Natural killer cell (primary cell): ENCODE measurements at regions of chr1 and their contacts with region 1.

Region 1: DNA sequence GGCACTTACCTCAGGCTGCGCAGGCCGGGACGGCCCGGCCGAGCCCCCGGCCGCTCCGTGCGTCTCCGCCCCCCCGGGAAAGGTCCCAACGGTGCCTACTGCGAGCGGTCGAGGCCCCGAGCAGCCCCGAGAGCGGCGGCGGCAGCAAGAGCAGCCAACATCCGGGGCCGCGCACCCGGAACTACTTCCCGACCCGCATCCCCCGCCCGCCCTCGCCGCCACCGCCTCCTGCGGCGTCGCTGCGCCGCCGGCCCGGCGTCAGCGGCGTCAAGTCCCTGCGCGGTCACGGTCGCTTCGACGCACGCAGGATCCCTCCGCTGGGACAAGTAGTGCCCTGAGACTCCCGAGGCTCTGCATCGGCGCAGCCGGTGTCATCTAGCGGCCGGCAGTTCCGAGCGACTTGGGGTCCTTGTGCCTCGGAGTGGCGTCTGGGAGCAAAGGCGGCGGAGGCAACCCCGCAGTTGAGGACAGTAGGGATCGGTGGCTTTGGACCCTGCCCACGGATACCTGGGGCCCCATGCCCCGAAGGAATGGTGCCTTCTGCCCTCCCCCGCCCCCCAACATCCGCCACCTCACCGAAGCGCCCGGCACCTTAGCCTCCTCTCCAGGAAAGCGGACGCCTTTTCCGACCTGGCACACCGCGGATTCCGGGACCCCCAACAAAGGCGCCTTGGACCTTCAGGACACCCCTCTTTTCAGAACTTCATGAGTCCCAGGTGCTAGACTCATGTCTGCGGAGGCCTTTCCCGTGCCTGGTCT is at the start of gene FOXJ3:
- DNase-seq: peak; percentile 84 to 99
- ATAC-seq: peak; percentile 91 to 96 (median 94)
- H3K4me3 ChIP-seq: peak within 1 kb of the TSS; percentile 96
- H3K4me3 Mint-ChIP-seq: peak within 1 kb of the TSS; percentile 89
- H3K27ac ChIP-seq: peak within 1 kb of the TSS; percentile 92
- H3K27ac Mint-ChIP-seq: peak within 1 kb of the TSS; percentile 81 to 91
- H3K4me1 ChIP-seq: peaks cover 10% of the 10 kb centered on the region
- H3K4me1 Mint-ChIP-seq: peaks cover 47 to 59% of the 10 kb centered on the region in 2 donors
- H3K27me3 ChIP-seq: no peaks in the 10 kb centered on the region
- H3K27me3 Mint-ChIP-seq: no peaks in the 10 kb centered on the region
- CTCF ChIP-seq: no peak
- total RNA-seq, gene FOXJ3: 81.9 to 93.8 (median 82.5) TPM

Region 2: DNA sequence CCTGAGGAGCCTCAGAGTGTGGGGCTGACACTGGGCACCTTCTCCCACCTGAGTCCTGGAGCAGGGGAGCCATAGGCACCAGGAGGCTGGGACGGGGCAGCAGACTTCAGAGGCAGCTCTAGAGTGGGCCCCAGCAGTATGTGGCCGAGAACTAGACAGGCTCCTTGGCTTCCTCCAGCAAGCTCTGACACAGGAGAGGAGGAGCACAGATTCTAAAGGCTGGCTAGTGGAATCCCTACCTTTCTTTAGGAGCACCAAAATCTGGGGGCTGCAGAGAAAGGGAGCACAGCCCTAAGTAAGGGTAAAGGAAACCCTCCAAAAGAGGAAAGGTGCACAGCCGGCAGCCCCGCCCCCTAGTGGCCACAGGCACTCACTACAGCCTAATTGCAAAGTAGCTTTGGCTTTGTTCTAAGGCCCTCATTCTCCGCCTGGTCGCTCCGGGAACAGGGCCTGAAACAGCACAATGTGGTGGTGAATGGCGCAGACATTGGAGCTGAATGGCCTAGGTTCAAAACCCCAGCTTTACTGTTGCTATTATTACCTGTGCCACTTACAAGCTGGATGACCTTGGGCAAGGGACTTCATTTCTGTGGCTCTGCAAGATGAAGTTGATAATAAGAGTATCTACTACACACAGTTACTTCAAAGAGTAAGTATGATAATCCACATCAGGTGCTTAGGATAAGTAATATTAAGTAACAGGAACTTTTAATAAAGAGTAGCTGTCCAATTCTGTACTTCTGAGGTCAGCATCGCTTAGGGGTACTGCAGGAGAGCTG is 161.9 kb before region 1 on chr1:
- intact Hi-C with region 1: loop called (anchors 5 kb)
- DNase-seq: peak; percentile 65 to 74
- ATAC-seq: peak; percentile 75 to 86 (median 83)
- H3K4me3 ChIP-seq: no peak overlapping the region
- H3K4me3 Mint-ChIP-seq: no peak overlapping the region
- H3K27ac ChIP-seq: no peak overlapping the region
- H3K27ac Mint-ChIP-seq: no peak overlapping the region
- H3K4me1 ChIP-seq: no peaks in the 10 kb centered on the region
- H3K4me1 Mint-ChIP-seq: peaks cover 0 to 4% of the 10 kb centered on the region in 2 donors
- H3K27me3 ChIP-seq: no peaks in the 10 kb centered on the region
- H3K27me3 Mint-ChIP-seq: no peaks in the 10 kb centered on the region
- CTCF ChIP-seq: peak; percentile 93

Region 3: GRCh38 chr1:42319128-42319851 is 15.9 kb before region 1 on chr1:
- intact Hi-C with region 1: loop called (anchors 2 kb)
- DNase-seq: peak in 1 of 2 donors; percentile 34
- ATAC-seq: peak in 2 of 3 donors; percentile 56 to 65
- H3K4me3 ChIP-seq: no peak overlapping the region
- H3K4me3 Mint-ChIP-seq: peak overlapping the region; percentile 56
- H3K27ac ChIP-seq: peak overlapping the region; percentile 56
- H3K27ac Mint-ChIP-seq: peak overlapping the region; percentile 90
- H3K4me1 ChIP-seq: peaks cover 24% of the 10 kb centered on the region
- H3K4me1 Mint-ChIP-seq: peaks cover 83 to 86% of the 10 kb centered on the region in 2 donors
- H3K27me3 ChIP-seq: no peaks in the 10 kb centered on the region
- H3K27me3 Mint-ChIP-seq: no peaks in the 10 kb centered on the region
- CTCF ChIP-seq: no peak

Region 4: DNA sequence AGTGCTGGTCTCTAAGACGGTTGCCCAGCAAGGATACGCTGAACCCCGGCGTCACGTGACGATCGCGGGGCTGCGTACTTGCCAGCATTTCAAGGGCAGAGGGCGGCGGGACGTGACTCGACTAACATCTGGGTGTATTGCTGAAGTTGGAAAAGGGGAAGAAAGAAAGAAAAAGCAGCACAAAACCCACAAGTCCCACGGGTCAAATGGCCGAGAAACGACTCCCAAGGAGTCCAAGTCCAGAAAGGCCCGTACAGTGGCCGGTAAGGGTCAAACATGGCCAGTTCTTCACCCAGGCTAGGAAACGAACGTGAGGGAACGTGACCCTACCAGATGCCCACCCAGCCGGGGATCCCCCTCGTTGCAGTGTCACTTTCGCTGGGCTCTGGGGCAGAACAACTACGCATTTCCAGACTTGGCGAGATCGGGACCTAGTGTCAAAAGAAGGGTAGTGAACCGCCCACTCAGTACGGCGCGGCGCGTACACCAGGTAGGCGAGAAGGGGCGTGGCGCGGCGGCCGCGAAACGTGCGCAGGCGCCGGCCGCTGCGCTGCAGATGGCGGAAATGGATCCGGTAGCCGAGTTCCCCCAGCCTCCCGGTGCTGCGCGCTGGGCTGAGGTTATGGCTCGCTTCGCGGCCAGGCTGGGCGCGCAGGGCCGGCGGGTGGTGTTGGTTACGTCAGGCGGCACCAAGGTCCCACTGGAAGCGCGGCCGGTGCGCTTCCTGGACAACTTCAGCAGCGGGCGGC is 121.0 kb after region 1 on chr1 and contains the starts of genes PPCS and ZMYND12:
- intact Hi-C with region 1: loop called (anchors 2 kb)
- DNase-seq: peak; percentile 89 to 97
- ATAC-seq: peak; percentile 87 to 96 (median 87)
- H3K4me3 ChIP-seq: peak within 1 kb of the TSS; percentile 89
- H3K4me3 Mint-ChIP-seq: peak within 1 kb of the TSS; percentile 94
- H3K27ac ChIP-seq: peak within 1 kb of the TSS; percentile 89
- H3K27ac Mint-ChIP-seq: peak within 1 kb of the TSS; percentile 87 to 95
- H3K4me1 ChIP-seq: peaks cover 23% of the 10 kb centered on the region
- H3K4me1 Mint-ChIP-seq: peaks cover 26 to 33% of the 10 kb centered on the region in 2 donors
- H3K27me3 ChIP-seq: peaks cover 3% of the 10 kb centered on the region
- H3K27me3 Mint-ChIP-seq: peaks cover 0 to 4% of the 10 kb centered on the region in 2 donors
- CTCF ChIP-seq: no peak
- total RNA-seq, gene PPCS: 44.2 to 54.5 (median 50.2) TPM
- total RNA-seq, gene ZMYND12: 0.47 to 1.1 (median 0.97) TPM